Activated T-helper 2 cell treated with anti-CD3 and anti-CD28 coated beads, Interferon-gamma antibody, Interleukin-2, Interleukin-4, amounts not matched to agents 10 μg/mL and 5 μg/mL and 100 μg/mL, durations not matched to agents 14 hours and 24 hours and 36 hours (primary cell): ENCODE measurements at regions of chr5 and their contacts with region 1.

Region 1: GRCh38 chr5:158819840-158820620 is 279.7 kb downstream of the EBF1 start:
- DNase-seq: no peak
- H3K4me3 Mint-ChIP-seq: no peak overlapping the region
- H3K27ac Mint-ChIP-seq: peak overlapping the region; percentile 18
- H3K4me1 Mint-ChIP-seq: peaks cover 39% of the 10 kb centered on the region
- H3K27me3 Mint-ChIP-seq: no peaks in the 10 kb centered on the region

Region 2: GRCh38 chr5:158543539-158544387 is 276.3 kb before region 1 on chr5:
- intact Hi-C with region 1: loop called (anchors 5 kb)
- DNase-seq: no peak
- H3K4me3 Mint-ChIP-seq: no peak overlapping the region
- H3K27ac Mint-ChIP-seq: no peak overlapping the region
- H3K4me1 Mint-ChIP-seq: peaks cover 19% of the 10 kb centered on the region
- H3K27me3 Mint-ChIP-seq: peaks cover 8% of the 10 kb centered on the region

Region 3: DNA sequence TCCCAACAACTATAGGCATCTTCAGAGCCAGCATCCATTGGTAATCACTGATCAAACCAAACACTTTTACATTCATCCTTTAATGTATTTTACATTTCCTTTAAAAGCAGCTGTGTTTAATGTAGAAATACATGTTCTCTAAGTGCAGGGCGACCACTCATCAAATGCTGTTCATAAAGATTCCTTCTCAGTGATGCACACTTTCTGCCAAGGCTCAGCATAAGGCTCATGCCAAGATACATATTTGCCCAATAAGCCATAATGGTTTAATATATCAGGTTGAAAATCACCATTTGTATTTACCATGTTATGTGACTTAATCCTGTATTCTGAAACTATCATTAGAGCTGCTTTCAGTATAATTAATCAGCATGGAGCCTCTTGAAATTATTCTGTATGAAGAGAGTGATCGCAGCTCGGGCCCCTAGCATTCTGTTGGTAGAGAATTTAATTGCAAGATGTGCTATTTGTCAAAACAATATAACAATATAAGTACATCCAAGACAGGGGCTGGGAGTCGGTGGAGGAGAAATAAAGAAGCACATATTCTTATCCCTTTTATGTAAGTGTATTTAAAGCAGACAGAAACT is 12.2 kb after region 1 on chr5:
- intact Hi-C with region 1: no loop called
- DNase-seq: no peak
- H3K4me3 Mint-ChIP-seq: no peak overlapping the region
- H3K27ac Mint-ChIP-seq: no peak overlapping the region
- H3K4me1 Mint-ChIP-seq: no peaks in the 10 kb centered on the region
- H3K27me3 Mint-ChIP-seq: peaks cover 16% of the 10 kb centered on the region

Region 4: DNA sequence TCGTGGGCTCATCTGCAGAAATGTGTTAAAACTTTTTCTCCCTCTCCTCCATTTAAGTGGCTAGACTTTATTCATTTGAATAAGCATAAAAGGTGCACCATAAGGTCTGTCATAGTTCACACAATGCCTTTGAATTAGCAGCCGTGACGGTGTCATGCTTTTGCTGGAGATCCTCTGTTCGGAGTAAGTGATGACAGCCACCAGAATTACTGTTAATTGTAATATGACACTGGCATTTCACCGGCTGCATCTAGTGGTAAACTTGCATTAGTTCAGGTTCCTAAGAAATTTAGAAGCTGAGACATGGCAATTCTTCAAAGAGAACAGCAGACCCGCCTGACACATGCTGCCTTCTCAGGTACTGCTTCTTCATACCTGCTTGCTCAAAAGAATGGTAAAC is 37.9 kb after region 1 on chr5:
- intact Hi-C with region 1: loop called (anchors 2 kb)
- DNase-seq: no peak
- H3K4me3 Mint-ChIP-seq: no peak overlapping the region
- H3K27ac Mint-ChIP-seq: no peak overlapping the region
- H3K4me1 Mint-ChIP-seq: peaks cover 14% of the 10 kb centered on the region
- H3K27me3 Mint-ChIP-seq: peaks cover 23% of the 10 kb centered on the region

Region 5: DNA sequence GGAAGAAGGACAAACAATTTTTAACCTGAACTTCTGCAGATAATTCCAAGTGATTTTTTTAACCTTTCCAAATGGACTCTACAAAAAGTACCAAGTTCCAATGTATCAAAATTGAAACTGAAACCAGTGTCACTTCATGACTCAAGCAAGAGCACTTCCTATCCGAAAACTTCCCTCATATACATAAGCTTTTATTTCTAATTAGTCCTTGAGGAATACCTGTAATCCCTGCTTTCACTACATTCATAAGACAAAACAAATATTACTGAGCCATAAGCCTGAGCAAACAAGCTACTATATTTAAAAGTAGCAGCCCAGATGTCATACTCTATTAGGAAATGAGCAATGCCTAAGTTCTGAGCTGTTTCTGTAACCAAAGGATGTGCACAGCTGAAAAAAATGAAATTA is 55.2 kb after region 1 on chr5:
- intact Hi-C with region 1: loop called (anchors 1 kb)
- DNase-seq: no peak
- H3K4me3 Mint-ChIP-seq: no peak overlapping the region
- H3K27ac Mint-ChIP-seq: no peak overlapping the region
- H3K4me1 Mint-ChIP-seq: peaks cover 20% of the 10 kb centered on the region
- H3K27me3 Mint-ChIP-seq: peaks cover 3% of the 10 kb centered on the region

Region 6: DNA sequence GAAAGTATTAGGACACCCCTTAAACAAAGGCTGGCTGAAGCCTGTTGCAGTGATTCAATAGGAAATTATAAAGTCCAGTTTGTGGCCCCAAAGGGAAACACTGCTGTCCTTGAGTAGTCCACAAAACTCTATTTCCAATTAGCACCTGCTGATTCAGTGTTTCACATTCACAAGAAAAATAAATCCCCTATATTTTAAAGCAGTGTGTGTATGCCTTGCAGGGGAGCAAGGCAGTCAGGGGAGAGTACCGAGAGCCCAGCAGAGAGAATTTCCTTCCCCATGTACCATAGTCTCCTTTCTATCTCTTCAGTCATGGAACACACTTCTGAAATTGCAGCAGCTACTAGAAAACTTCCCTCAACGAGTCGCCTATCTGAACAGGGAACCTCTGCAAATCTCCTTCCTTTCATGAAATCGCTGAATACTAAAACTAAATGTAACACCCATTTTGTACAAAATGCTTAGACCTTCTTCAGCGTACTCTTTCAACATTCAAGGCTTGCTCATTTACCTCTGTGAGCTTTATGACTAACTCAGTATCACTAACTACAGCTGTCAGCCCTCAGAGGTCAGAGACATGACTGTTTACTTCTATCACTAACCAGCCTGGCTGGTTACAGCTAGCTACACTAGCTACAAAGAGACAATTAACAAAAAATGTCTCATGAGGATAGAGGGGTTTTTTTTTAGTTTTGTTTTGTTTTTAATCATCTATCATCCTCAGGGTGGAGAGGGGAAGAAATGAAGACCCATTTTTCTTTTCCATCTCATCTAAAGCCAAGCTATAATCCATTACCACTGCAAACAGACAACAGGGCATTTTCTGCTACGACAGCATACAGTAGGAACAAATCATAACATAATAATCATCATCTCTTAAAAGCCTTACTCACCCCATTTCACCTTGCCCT is 91.0 kb after region 1 on chr5:
- intact Hi-C with region 1: no loop called
- DNase-seq: no peak
- H3K4me3 Mint-ChIP-seq: no peak overlapping the region
- H3K27ac Mint-ChIP-seq: no peak overlapping the region
- H3K4me1 Mint-ChIP-seq: no peaks in the 10 kb centered on the region
- H3K27me3 Mint-ChIP-seq: peaks cover 3% of the 10 kb centered on the region

Region 7: DNA sequence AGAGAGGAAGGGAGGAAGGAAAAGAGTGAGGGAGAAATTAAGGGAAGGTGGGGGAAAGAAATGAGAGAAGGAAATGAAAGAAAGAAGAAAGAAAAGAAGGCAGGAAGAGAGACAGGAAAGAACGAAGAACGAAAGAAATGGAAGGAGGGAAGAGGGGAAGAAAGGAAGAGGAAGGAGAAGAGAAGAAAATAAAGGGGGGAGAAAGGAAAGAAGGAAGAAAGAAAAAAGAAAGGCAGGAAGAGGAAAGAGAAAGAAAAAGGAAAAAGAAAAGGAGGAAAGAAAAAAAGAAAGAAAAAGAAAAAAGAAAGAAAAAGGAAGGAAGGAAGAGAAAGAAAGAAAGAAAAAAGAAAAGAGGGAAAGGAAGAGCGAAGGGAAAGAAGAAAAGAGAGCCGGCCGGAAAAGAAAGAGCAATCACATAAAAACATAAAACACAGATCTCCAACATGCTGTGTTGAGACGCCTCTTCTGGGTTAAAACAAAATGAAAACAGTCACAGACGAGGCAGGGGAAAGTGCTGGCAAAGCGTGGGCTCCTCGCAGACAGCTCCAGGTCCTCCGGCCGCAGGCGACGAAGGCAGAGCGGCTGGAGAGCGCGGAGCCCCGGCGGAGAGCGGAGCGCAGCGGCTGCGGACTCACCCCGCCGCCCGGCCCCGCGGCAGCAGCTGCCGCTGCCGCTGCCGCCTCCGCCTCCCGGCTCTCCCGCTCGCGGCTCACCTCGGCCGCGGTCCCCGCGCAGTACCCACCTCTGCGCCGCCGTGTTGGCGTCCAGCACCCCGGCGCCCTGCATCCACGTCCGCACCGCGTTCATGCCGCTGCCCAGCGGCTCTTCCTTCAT is 278.8 kb after region 1 on chr5:
- intact Hi-C with region 1: loop called (anchors 2 kb)
- DNase-seq: peak; percentile 37
- H3K4me3 Mint-ChIP-seq: peak overlapping the region; percentile 81
- H3K27ac Mint-ChIP-seq: no peak overlapping the region
- H3K4me1 Mint-ChIP-seq: peaks cover 29% of the 10 kb centered on the region
- H3K27me3 Mint-ChIP-seq: peaks cover 84% of the 10 kb centered on the region

Region 8: GRCh38 chr5:159209438-159210305 is 389.6 kb after region 1 on chr5 and contains the start of gene RNF145:
- intact Hi-C with region 1: no loop called
- DNase-seq: peak; percentile 86
- H3K4me3 Mint-ChIP-seq: peak within 1 kb of the TSS; percentile 91
- H3K27ac Mint-ChIP-seq: peak within 1 kb of the TSS; percentile 97
- H3K4me1 Mint-ChIP-seq: peaks cover 50% of the 10 kb centered on the region
- H3K27me3 Mint-ChIP-seq: peaks cover 7% of the 10 kb centered on the region
- total RNA-seq, gene RNF145: 113 and 124 TPM in 2 replicates

Region 9: GRCh38 chr5:159405611-159406031 is 585.6 kb after region 1 on chr5:
- intact Hi-C with region 1: loop called (anchors 5 kb)
- DNase-seq: no peak
- H3K4me3 Mint-ChIP-seq: no peak overlapping the region
- H3K27ac Mint-ChIP-seq: no peak overlapping the region
- H3K4me1 Mint-ChIP-seq: peaks cover 22% of the 10 kb centered on the region
- H3K27me3 Mint-ChIP-seq: peaks cover 61% of the 10 kb centered on the region